ENCODE measurements at regions of chr19 and their contacts with region 1.

Region 1: GRCh38 chr19:51607920-51608562 is 22.2 kb downstream of the SIGLEC5 start:
- DNase-seq: no peak
- ATAC-seq: peak; percentile 46
- H3K4me3 ChIP-seq: no peak overlapping the region
- H3K27ac ChIP-seq: peak overlapping the region; percentile 84
- H3K4me1 ChIP-seq: peaks cover 30% of the 10 kb centered on the region
- H3K27me3 ChIP-seq: no peaks in the 10 kb centered on the region
- CTCF ChIP-seq: peak; percentile 59 to 64 (median 63)
- EP300 ChIP-seq: no peak
- POLR2A ChIP-seq: no peak
- RAD21 ChIP-seq: peak; percentile 67

Region 2: DNA sequence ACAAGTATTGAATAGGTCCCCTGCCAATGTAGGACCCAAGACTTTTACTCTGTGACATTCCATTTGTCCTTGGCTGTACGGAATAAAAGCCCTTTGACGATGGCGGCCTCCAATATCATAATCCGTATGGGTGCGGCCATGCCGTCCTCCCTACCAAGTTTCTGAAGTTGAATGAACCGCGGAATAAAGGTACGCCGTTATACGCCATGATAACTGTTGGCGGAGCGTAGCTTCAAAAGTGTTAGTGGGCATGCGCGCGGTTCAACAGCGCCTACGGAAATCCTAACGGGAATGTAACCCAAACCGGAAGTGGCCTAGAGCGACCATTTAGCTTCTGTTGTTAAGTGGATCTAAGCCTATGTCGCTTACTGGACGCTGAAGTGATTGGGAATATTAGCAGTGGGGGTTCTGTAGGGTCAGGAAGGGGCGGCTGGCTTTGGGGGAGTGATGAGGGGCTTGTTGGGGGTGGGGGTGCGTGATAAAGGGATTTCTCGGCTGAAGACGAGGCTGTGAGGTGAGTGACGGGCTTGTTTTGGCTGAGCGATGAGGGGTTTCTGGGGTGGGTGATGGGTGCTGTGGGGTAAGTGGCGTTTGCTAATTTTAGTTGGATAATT is 37.0 kb before region 1 on chr19 and contains the start of gene ZNF175:
- CTCF ChIA-PET with region 1: no interaction called
- POLR2A ChIA-PET with region 1: no interaction called
- RAD21 ChIA-PET with region 1: interaction called, 3 read pairs
- SMC1A ChIA-PET with region 1: interaction called, 5 read pairs
- in situ Hi-C with region 1: no loop called
- intact Hi-C with region 1: loop called (anchors 5 kb)
- DNase-seq: peak; percentile 97
- ATAC-seq: peak; percentile 96
- H3K4me3 ChIP-seq: peak within 1 kb of the TSS; percentile 89
- H3K27ac ChIP-seq: peak within 1 kb of the TSS; percentile 49
- H3K4me1 ChIP-seq: peaks cover 8% of the 10 kb centered on the region; the same call in 1 of the 2 replicates
- H3K27me3 ChIP-seq: no peaks in the 10 kb centered on the region
- CTCF ChIP-seq: no peak
- EP300 ChIP-seq: no peak
- POLR2A ChIP-seq: peak; percentile 48; the same call in 1 of the 2 replicates
- RAD21 ChIP-seq: no peak
- polyA plus RNA-seq, gene ZNF175: 1.5 to 1.8 TPM

Region 3: GRCh38 chr19:51621178-51621577 is 13.1 kb after region 1 on chr19:
- CTCF ChIA-PET with region 1: interaction called, 4 read pairs
- POLR2A ChIA-PET with region 1: no interaction called
- RAD21 ChIA-PET with region 1: interaction called, 4 read pairs
- SMC1A ChIA-PET with region 1: interaction called, 19 read pairs
- in situ Hi-C with region 1: no loop called
- intact Hi-C with region 1: no loop called
- DNase-seq: peak; percentile 56
- ATAC-seq: peak; percentile 94
- H3K4me3 ChIP-seq: no peak overlapping the region
- H3K27ac ChIP-seq: no peak overlapping the region; the same call in 1 of the 2 replicates
- H3K4me1 ChIP-seq: peaks cover 13% of the 10 kb centered on the region; the same call in 1 of the 2 replicates
- H3K27me3 ChIP-seq: no peaks in the 10 kb centered on the region
- CTCF ChIP-seq: no peak
- EP300 ChIP-seq: peak in 1 of 2 experiments; percentile 65; a peak in 3 of 4 replicates
- POLR2A ChIP-seq: no peak
- RAD21 ChIP-seq: no peak

Region 4: DNA sequence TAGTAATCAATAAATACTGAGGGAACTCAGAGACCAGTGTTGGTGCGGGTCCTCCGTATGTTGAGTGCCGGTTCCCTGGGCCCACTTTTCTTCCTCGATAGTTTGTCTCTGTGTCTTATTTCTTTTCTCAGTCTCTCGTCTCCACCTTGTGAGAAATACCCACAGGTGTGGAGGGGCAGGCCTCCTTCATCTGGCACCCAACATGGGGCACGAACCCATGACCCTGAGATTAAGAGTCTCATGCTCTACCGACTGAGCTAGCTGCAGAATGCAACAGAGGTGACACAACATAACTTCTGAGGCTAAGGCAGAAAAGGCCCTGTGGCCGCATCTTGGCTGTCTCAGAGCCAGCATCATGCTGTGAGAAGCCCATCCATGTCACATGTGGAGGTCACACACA is 313.9 kb after region 1 on chr19:
- CTCF ChIA-PET with region 1: no interaction called
- POLR2A ChIA-PET with region 1: no interaction called
- RAD21 ChIA-PET with region 1: no interaction called
- SMC1A ChIA-PET with region 1: no interaction called
- in situ Hi-C with region 1: no loop called
- intact Hi-C with region 1: no loop called
- DNase-seq: no peak
- ATAC-seq: no peak
- H3K4me3 ChIP-seq: no peak overlapping the region
- H3K27ac ChIP-seq: no peak overlapping the region
- H3K4me1 ChIP-seq: no peaks in the 10 kb centered on the region
- H3K27me3 ChIP-seq: no peaks in the 10 kb centered on the region
- CTCF ChIP-seq: no peak
- EP300 ChIP-seq: no peak
- POLR2A ChIP-seq: no peak
- RAD21 ChIP-seq: no peak

Measured in GM12878 (cell line).